WTC11 (cell line): ENCODE measurements at regions of chr13 and their contacts with region 1.

Region 1: DNA sequence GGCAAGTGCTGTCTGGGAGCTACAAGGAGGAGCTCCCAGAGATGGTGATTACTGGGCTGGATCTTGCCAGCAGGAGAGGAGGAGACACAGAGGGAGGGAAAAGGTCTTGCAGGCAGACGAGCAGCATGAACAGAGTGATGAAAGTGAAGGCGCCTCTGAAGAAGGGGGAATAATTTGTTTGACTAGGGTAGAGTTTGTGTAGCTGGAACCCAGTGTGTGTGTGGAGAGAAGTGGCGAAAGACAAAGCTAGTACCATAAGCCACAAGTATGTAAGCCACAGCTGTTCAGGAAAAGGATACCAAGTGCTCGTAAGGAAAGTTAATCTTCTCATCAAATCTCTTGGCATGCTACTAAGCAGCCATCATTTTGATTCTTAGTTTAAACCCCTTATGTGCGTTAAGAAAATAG is 5.4 kb downstream of the FLT1 start:
- DNase-seq: no peak
- ATAC-seq: no peak
- H3K4me3 Mint-ChIP-seq: no peak overlapping the region
- H3K27ac Mint-ChIP-seq: peak overlapping the region; percentile 56
- H3K4me1 Mint-ChIP-seq: peaks cover 78% of the 10 kb centered on the region
- H3K27me3 Mint-ChIP-seq: no peaks in the 10 kb centered on the region
- CTCF ChIP-seq: no peak

Region 2: DNA sequence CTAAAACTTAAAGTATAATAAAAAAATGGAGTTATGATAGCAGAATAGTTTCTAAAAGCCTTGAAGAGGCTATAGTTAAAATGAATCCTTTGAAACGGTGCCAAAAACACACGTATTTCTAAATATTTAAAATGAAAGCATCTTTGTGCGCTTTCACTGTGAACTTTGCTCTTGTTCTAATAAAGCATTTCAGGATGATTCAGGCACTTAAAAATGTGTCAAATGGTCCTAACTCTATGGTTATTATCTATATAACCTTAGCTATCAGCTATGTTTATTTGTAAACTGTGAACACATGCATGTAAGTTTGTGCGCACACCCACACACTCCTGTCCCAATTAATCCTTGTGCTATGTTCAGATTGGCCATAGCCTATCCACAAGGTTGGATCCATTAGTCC is 119.1 kb before region 1 on chr13:
- CTCF ChIA-PET with region 1: no interaction called
- POLR2A ChIA-PET with region 1: interaction called, 10 read pairs
- DNase-seq: no peak
- ATAC-seq: no peak
- H3K4me3 Mint-ChIP-seq: no peak overlapping the region
- H3K27ac Mint-ChIP-seq: no peak overlapping the region
- H3K4me1 Mint-ChIP-seq: peaks cover 6% of the 10 kb centered on the region
- H3K27me3 Mint-ChIP-seq: no peaks in the 10 kb centered on the region
- CTCF ChIP-seq: no peak

Region 3: GRCh38 chr13:28468023-28468915 is 21.3 kb before region 1 on chr13:
- CTCF ChIA-PET with region 1: no interaction called
- POLR2A ChIA-PET with region 1: no interaction called
- DNase-seq: no peak
- ATAC-seq: peak; percentile 67
- H3K4me3 Mint-ChIP-seq: no peak overlapping the region
- H3K27ac Mint-ChIP-seq: peak overlapping the region; percentile 58; the same call in 1 of the 2 replicates
- H3K4me1 Mint-ChIP-seq: peaks cover 52% of the 10 kb centered on the region
- H3K27me3 Mint-ChIP-seq: no peaks in the 10 kb centered on the region
- CTCF ChIP-seq: no peak

Region 4: GRCh38 chr13:28479005-28479404 is 10.5 kb before region 1 on chr13:
- CTCF ChIA-PET with region 1: no interaction called
- POLR2A ChIA-PET with region 1: no interaction called
- DNase-seq: no peak
- ATAC-seq: no peak
- H3K4me3 Mint-ChIP-seq: no peak overlapping the region
- H3K27ac Mint-ChIP-seq: 0 out of 2 replicates have a peak overlapping the region, but pooled peaks have one; percentile 17
- H3K4me1 Mint-ChIP-seq: peaks cover 71% of the 10 kb centered on the region
- H3K27me3 Mint-ChIP-seq: no peaks in the 10 kb centered on the region
- CTCF ChIP-seq: no peak

Region 5: GRCh38 chr13:28590461-28590860 is 100.9 kb after region 1 on chr13:
- CTCF ChIA-PET with region 1: no interaction called
- POLR2A ChIA-PET with region 1: no interaction called
- DNase-seq: no peak
- ATAC-seq: no peak
- H3K4me3 Mint-ChIP-seq: no peak overlapping the region
- H3K27ac Mint-ChIP-seq: no peak overlapping the region
- H3K4me1 Mint-ChIP-seq: peaks cover 20% of the 10 kb centered on the region
- H3K27me3 Mint-ChIP-seq: no peaks in the 10 kb centered on the region
- CTCF ChIP-seq: no peak

Region 6: DNA sequence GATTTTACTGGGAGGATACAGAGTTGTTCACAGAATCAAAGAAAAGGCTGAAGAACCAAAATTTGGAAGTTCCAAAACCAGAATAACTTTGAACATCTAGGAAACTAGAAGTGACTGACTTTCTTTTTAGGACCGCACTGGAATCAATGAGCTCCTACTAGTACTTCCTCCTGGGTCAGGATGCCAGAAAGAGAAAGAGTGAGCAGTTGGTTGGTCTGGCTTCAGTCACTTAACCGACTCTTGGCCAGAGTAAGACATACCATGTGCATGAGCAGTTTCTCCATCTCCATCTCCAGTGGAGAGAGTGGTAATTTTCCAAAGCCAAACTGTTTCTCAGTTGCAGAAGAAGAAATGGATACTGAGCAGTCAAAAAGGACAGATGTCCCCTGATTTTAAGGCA is 303.5 kb after region 1 on chr13:
- CTCF ChIA-PET with region 1: no interaction called
- POLR2A ChIA-PET with region 1: no interaction called
- DNase-seq: no peak
- ATAC-seq: no peak
- H3K4me3 Mint-ChIP-seq: no peak overlapping the region
- H3K27ac Mint-ChIP-seq: no peak overlapping the region
- H3K4me1 Mint-ChIP-seq: peaks cover 11% of the 10 kb centered on the region; the same call in 1 of the 2 replicates
- H3K27me3 Mint-ChIP-seq: peaks cover 7% of the 10 kb centered on the region; the same call in 1 of the 2 replicates
- CTCF ChIP-seq: no peak